HCT116 (cell line): ENCODE measurements at regions of chr5 and their contacts with region 1.

Region 1: GRCh38 chr5:41270423-41271251 is 57.3 kb upstream of the C6 start:
- DNase-seq: peak; percentile 33
- ATAC-seq: peak; percentile 91
- H3K4me3 ChIP-seq: no peak overlapping the region
- H3K27ac ChIP-seq: no peak overlapping the region
- H3K4me1 ChIP-seq: no peaks in the 10 kb centered on the region
- H3K27me3 ChIP-seq: 0 out of 2 replicates have a peak, but pooled peaks cover 5% of the 10 kb centered on the region
- CTCF ChIP-seq: peak; percentile 51 to 77 (median 70); a peak in 5 of 6 replicates
- POLR2A ChIP-seq: no peak
- RAD21 ChIP-seq: peak; percentile 73

Region 2: DNA sequence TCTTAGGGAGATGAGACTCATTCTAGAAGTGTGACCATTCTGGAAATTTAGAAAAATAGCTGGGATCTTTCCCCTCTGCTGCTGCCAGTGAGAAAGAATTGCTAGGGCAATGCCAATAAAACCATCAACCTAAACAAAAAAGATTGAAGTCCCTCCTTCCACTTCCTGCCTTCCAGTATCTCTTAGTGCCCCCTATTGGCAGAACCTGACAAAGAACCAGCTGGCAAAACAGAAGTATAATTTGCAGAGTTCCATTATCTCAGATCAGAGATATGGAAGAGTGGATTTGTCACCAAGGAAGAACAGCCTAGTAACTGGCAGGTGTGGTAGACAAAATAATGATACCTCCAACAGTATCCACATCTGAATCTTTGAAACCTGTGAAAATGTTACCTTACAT is 253.5 kb after region 1 on chr5:
- CTCF ChIA-PET with region 1: interaction called, 6 read pairs
- POLR2A ChIA-PET with region 1: no interaction called
- RAD21 ChIA-PET with region 1: no interaction called
- intact Hi-C with region 1: loop called (anchors 5 kb)
- DNase-seq: no peak
- ATAC-seq: no peak
- H3K4me3 ChIP-seq: no peak overlapping the region
- H3K27ac ChIP-seq: no peak overlapping the region
- H3K4me1 ChIP-seq: peaks cover 0 to 12% of the 10 kb centered on the region in 2 experiments; a peak in 2 of 4 replicates
- H3K27me3 ChIP-seq: no peaks in the 10 kb centered on the region
- CTCF ChIP-seq: peak in 2 of 3 experiments; percentile 42 to 49; a peak in 4 of 6 replicates
- POLR2A ChIP-seq: no peak
- RAD21 ChIP-seq: peak; percentile 42

Region 3: GRCh38 chr5:41843456-41844370 is 573.1 kb after region 1 on chr5:
- CTCF ChIA-PET with region 1: no interaction called
- POLR2A ChIA-PET with region 1: no interaction called
- RAD21 ChIA-PET with region 1: no interaction called
- intact Hi-C with region 1: loop called (anchors 2 kb)
- DNase-seq: peak; percentile 37
- ATAC-seq: peak; percentile 54; the same call in 1 of the 2 replicates
- H3K4me3 ChIP-seq: no peak overlapping the region
- H3K27ac ChIP-seq: no peak overlapping the region
- H3K4me1 ChIP-seq: no peaks in the 10 kb centered on the region
- H3K27me3 ChIP-seq: no peaks in the 10 kb centered on the region
- CTCF ChIP-seq: peak; percentile 71 to 89 (median 73)
- POLR2A ChIP-seq: no peak
- RAD21 ChIP-seq: peak; percentile 80